ENCODE measurements at regions of chr17 and their contacts with region 1.

Region 1: GRCh38 chr17:7045909-7046724 is 2.2 kb upstream of the SLC16A11 start:
- DNase-seq: peak; percentile 75
- H3K4me3 Mint-ChIP-seq: peak overlapping the region; percentile 69
- H3K27ac Mint-ChIP-seq: peak overlapping the region; percentile 86
- H3K4me1 Mint-ChIP-seq: peaks cover 31% of the 10 kb centered on the region
- H3K27me3 Mint-ChIP-seq: peaks cover 11% of the 10 kb centered on the region

Region 2: GRCh38 chr17:6969323-6969726 is 76.8 kb before region 1 on chr17:
- CTCF ChIA-PET with region 1: no interaction called
- POLR2A ChIA-PET with region 1: no interaction called
- DNase-seq: no peak
- H3K4me3 Mint-ChIP-seq: no peak overlapping the region
- H3K27ac Mint-ChIP-seq: no peak overlapping the region
- H3K4me1 Mint-ChIP-seq: peaks cover 2% of the 10 kb centered on the region
- H3K27me3 Mint-ChIP-seq: no peaks in the 10 kb centered on the region

Region 3: DNA sequence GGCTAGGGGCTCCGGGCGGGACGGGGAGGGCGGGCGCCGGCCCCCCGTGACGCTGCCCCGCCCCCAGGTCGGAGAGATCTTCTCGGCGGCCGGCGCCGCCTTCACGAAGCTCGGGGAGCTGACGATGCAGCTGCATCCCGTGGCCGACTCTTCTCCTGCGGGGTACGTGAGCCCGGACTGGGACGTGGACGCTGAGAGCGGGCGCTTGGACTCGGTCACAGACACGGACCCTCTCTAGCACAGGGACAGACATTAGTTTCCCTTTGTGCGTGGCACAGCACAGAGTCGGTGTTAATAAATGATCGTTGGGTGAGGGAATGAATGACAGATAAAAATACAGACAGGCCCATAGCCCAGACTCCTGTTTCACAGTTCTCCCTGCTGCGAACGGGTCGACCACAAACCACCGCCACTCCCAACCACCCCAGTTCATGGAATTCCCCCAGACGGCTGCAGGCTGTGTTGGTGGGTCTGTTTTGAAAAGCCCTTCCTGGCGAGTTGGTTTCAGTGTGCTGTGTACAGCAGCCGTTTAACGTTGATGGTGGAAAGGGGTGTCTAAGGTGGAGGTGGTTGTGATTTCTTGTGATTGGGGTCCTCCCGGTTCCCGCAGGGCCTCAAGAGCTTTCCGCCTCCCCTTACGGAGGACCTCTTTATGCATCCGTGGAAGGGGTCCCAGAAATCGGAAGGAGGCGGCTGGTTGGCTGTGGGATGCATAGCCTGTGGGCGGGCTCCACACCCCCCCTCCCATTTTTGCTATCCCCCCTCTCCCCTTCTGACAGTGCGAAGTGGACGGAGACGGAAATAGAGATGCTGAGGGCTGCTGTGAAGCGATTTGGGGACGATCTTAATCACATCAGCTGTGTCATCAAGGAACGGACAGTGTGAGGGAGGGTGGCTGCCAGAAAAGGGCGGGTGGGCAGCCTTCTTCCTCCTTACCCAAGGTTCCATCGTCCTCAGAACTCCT is 30.8 kb before region 1 on chr17:
- CTCF ChIA-PET with region 1: no interaction called
- POLR2A ChIA-PET with region 1: no interaction called
- DNase-seq: peak; percentile 73
- H3K4me3 Mint-ChIP-seq: peak overlapping the region; percentile 91
- H3K27ac Mint-ChIP-seq: peak overlapping the region; percentile 97
- H3K4me1 Mint-ChIP-seq: peaks cover 63% of the 10 kb centered on the region
- H3K27me3 Mint-ChIP-seq: no peaks in the 10 kb centered on the region

Region 4: GRCh38 chr17:7035591-7036368 is 10.3 kb before region 1 on chr17 and contains the start of gene SLC16A13:
- CTCF ChIA-PET with region 1: interaction called, 10 read pairs
- POLR2A ChIA-PET with region 1: no interaction called
- DNase-seq: peak; percentile 99
- H3K4me3 Mint-ChIP-seq: peak within 1 kb of the TSS; percentile 87
- H3K27ac Mint-ChIP-seq: peak within 1 kb of the TSS; percentile 95
- H3K4me1 Mint-ChIP-seq: peaks cover 60% of the 10 kb centered on the region
- H3K27me3 Mint-ChIP-seq: no peaks in the 10 kb centered on the region
- total RNA-seq, gene SLC16A13: 18.0 to 19.1 TPM

Region 5: GRCh38 chr17:7136266-7136877 is 90.3 kb after region 1 on chr17:
- CTCF ChIA-PET with region 1: interaction called, 19 read pairs
- POLR2A ChIA-PET with region 1: no interaction called
- DNase-seq: peak; percentile 83
- H3K4me3 Mint-ChIP-seq: no peak overlapping the region
- H3K27ac Mint-ChIP-seq: no peak overlapping the region
- H3K4me1 Mint-ChIP-seq: peaks cover 20% of the 10 kb centered on the region
- H3K27me3 Mint-ChIP-seq: peaks cover 10% of the 10 kb centered on the region

Region 6: DNA sequence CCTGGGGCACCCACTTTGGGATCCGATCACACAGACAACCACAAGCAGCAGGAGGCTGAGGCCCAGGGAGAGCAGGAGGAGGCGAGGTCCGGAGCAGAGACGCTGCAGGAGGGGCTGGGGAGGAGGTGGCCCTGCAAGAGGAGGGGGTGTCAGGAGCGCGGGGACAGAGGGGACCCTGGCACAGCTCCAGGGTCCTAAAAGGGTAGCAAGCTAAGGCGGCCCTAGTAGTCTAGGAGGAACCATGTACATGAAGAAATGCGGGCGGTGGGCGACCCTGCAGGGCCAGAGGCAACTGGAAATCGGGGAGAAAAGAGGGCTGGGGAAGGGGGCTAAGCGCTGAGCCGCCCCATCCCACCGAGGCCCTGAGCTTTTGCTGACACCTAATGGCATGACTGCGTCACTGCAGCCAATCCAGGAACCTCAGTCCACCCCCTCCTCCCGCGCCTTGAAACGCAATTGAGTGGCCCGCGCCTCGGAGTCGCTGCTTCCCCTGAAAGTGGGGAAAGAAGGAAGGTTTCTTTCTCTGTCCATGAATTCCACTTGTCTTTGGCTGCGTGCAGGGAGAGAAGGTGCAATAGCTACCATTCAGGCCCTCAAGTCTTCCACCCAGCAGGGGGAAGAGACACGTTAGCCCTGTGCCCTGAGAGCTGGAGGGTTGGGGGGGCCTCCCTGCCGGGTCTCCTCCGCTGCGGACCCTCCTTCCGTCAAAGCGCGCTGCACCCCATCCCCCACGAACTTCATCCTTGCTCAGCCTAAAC is 131.3 kb after region 1 on chr17:
- CTCF ChIA-PET with region 1: interaction called, 13 read pairs
- POLR2A ChIA-PET with region 1: no interaction called
- DNase-seq: peak; percentile 74
- H3K4me3 Mint-ChIP-seq: peak overlapping the region; percentile 53
- H3K27ac Mint-ChIP-seq: peak overlapping the region; percentile 52
- H3K4me1 Mint-ChIP-seq: peaks cover 13% of the 10 kb centered on the region
- H3K27me3 Mint-ChIP-seq: peaks cover 14% of the 10 kb centered on the region